ENCODE measurements at regions of chr10 and their contacts with region 1.

Region 1: DNA sequence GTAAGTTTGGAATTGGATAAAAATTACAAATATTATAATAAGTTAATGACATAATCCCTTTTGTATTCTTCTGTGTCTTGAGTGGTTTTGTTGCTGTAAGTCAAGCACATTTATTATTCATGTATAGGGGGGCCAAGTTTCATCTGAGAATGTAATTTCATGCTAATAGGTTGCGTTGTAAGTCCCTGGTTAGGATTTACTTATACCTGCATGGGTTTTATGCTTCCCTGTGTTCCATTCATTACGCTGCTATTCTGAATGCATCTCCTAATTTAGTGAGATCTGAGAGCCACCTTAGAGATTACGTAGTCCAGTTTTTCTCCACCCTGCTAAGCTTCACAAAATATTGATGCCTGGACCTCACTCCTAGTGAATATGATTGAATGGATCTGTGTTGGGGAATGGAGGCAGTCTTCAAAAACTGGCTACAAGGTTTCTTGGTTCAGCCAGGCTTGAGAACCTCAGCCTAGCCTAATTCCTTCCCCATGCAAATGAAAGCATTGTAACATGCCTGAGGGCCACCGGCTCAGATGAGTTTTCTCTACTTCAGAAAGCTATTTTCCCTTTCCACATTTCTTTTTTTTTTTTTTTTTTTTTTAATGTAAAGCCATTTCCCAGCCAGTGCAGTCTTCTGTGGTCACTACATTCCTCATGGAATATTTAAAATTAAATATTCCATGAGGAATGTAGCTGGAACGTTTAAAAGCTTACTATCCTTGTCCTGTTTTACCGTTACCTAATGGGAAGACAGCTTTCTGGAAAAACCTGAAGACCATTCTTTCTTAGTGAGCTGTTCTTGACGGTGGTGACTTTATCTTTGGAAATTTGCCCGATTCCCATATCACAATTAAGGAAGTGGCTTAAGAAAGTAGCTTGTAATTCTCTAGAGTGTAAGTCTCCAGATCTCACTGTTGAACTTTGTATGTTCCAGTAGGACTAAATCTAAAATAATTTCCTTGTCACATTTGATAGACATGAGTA is 16.0 kb downstream of the PAPSS2 start:
- DNase-seq: peak in 1 of 2 experiments; percentile 82
- H3K4me3 ChIP-seq: no peak overlapping the region
- H3K27ac ChIP-seq: peak overlapping the region; percentile 66
- H3K4me1 ChIP-seq: peaks cover 14% of the 10 kb centered on the region
- H3K27me3 ChIP-seq: no peaks in the 10 kb centered on the region
- CTCF ChIP-seq: no peak

Region 2: GRCh38 chr10:87685832-87686574 is 10.3 kb after region 1 on chr10:
- CTCF ChIA-PET with region 1: no interaction called
- POLR2A ChIA-PET with region 1: interaction called, 17 read pairs
- intact Hi-C with region 1: no loop called
- DNase-seq: no peak
- H3K4me3 ChIP-seq: no peak overlapping the region
- H3K27ac ChIP-seq: no peak overlapping the region
- H3K4me1 ChIP-seq: 0 out of 2 replicates have a peak, but pooled peaks cover under 1% of the 10 kb centered on the region
- H3K27me3 ChIP-seq: no peaks in the 10 kb centered on the region
- CTCF ChIP-seq: no peak